B cell (primary cell): ENCODE measurements at regions of chr19 and their contacts with region 1.

Region 1: GRCh38 chr19:860481-861101 is 1.1 kb downstream of the CFD start:
- DNase-seq: peak; percentile 87
- ATAC-seq: peak; percentile 54
- H3K4me3 ChIP-seq: peak overlapping the region in 4 of 5 experiments; percentile 15 to 49 (median 35)
- H3K4me3 Mint-ChIP-seq: peak overlapping the region; percentile 56
- H3K27ac ChIP-seq: no peak overlapping the region
- H3K27ac Mint-ChIP-seq: no peak overlapping the region
- H3K4me1 ChIP-seq: peaks cover 29 to 51% of the 10 kb centered on the region in 2 donors
- H3K4me1 Mint-ChIP-seq: peaks cover 19% of the 10 kb centered on the region
- H3K27me3 ChIP-seq: peaks cover 0 to 38% (median 8%) of the 10 kb centered on the region in 4 experiments
- H3K27me3 Mint-ChIP-seq: peaks cover 7% of the 10 kb centered on the region
- CTCF ChIP-seq: peak; percentile 6

Region 2: GRCh38 chr19:771332-771785 is 89.2 kb before region 1 on chr19:
- CTCF ChIA-PET with region 1: interaction called, 5 read pairs
- POLR2A ChIA-PET with region 1: interaction called, 8 read pairs
- intact Hi-C with region 1: loop called (anchors 2 kb)
- DNase-seq: peak; percentile 50
- ATAC-seq: peak; percentile 45
- H3K4me3 ChIP-seq: no peak overlapping the region
- H3K4me3 Mint-ChIP-seq: no peak overlapping the region
- H3K27ac ChIP-seq: no peak overlapping the region
- H3K27ac Mint-ChIP-seq: no peak overlapping the region
- H3K4me1 ChIP-seq: peaks cover 0 to 3% of the 10 kb centered on the region in 2 donors
- H3K4me1 Mint-ChIP-seq: peaks cover 2% of the 10 kb centered on the region
- H3K27me3 ChIP-seq: peaks cover 0 to 15% (median 0%) of the 10 kb centered on the region in 4 experiments
- H3K27me3 Mint-ChIP-seq: peaks cover 10% of the 10 kb centered on the region
- CTCF ChIP-seq: peak; percentile 48

Region 3: DNA sequence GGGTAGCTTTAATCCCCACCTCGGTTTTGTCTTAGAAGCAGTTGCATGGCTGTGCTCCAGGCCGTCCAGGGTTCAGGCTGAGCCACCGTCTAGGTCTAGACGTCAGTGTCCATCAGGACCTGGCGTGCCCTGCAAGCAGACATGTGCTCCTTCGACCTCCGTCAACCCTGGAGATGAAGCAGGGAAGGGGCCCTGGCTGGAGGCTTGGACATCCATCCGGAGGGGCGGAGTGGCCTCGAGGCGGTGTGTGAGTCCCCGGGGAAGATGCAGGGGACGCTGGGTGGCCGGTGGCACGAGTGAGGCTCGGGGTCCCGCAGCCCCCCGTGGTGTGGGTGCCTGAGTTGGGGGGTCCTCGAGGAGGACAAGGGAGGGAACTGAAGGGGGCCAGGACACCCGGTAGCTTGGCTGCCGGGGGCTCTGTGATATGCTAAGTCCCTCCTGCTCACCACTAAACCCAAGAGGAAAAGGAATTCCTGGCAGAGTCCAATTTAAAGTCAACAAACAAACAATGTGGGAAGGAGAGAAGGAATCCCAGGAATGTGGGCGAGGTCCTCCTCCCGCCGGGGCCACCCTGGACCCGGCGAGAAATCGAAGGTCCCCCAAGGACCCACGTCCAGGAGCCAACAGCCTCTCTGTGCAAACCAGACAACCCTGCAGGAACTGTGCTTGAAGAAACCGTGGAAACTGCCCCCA is 78.3 kb before region 1 on chr19:
- CTCF ChIA-PET with region 1: no interaction called
- POLR2A ChIA-PET with region 1: no interaction called
- intact Hi-C with region 1: no loop called
- DNase-seq: no peak
- ATAC-seq: no peak
- H3K4me3 ChIP-seq: no peak overlapping the region
- H3K4me3 Mint-ChIP-seq: no peak overlapping the region
- H3K27ac ChIP-seq: no peak overlapping the region
- H3K27ac Mint-ChIP-seq: no peak overlapping the region
- H3K4me1 ChIP-seq: no peaks in the 10 kb centered on the region
- H3K4me1 Mint-ChIP-seq: no peaks in the 10 kb centered on the region
- H3K27me3 ChIP-seq: peaks cover 0 to 6% (median 0%) of the 10 kb centered on the region in 4 experiments
- H3K27me3 Mint-ChIP-seq: no peaks in the 10 kb centered on the region
- CTCF ChIP-seq: no peak

Region 4: GRCh38 chr19:907183-907853 is 46.7 kb after region 1 on chr19:
- CTCF ChIA-PET with region 1: interaction called, 46 read pairs
- POLR2A ChIA-PET with region 1: interaction called, 23 read pairs
- intact Hi-C with region 1: no loop called
- DNase-seq: peak; percentile 86
- ATAC-seq: peak; percentile 28
- H3K4me3 ChIP-seq: peak overlapping the region in 4 of 5 experiments; percentile 6 to 38 (median 28)
- H3K4me3 Mint-ChIP-seq: peak overlapping the region; percentile 85
- H3K27ac ChIP-seq: peak overlapping the region; percentile 97 to 99
- H3K27ac Mint-ChIP-seq: peak overlapping the region; percentile 100
- H3K4me1 ChIP-seq: peaks cover 52 to 65% of the 10 kb centered on the region in 2 donors
- H3K4me1 Mint-ChIP-seq: peaks cover 52% of the 10 kb centered on the region
- H3K27me3 ChIP-seq: no peaks in the 10 kb centered on the region
- H3K27me3 Mint-ChIP-seq: no peaks in the 10 kb centered on the region
- CTCF ChIP-seq: no peak

Region 5: DNA sequence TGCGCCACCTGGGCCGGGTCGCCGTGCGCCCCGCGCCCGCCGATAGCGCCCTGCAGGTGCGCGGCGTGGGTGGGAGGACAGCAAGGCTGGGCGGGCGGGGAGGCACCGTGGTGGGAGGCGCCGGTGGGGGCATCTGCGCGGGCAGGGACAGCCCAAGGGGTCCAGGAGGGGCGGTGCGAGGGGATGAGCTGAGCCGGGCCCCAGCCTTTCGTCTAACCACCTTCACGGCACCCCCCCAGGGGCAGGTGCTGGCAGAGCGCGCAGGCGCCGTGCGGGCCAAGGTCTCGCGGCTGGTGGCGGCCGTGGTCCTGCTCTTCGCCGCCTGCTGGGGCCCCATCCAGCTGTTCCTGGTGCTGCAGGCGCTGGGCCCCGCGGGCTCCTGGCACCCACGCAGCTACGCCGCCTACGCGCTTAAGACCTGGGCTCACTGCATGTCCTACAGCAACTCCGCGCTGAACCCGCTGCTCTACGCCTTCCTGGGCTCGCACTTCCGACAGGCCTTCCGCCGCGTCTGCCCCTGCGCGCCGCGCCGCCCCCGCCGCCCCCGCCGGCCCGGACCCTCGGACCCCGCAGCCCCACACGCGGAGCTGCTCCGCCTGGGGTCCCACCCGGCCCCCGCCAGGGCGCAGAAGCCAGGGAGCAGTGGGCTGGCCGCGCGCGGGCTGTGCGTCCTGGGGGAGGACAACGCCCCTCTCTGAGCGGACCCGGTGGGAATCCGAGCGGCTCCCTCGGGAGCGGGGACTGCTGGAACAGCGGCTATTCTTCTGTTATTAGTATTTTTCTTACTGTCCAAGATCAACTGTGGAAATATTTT is 59.7 kb after region 1 on chr19:
- CTCF ChIA-PET with region 1: interaction called, 72 read pairs
- POLR2A ChIA-PET with region 1: interaction called, 15 read pairs
- intact Hi-C with region 1: loop called (anchors 1 kb)
- DNase-seq: peak; percentile 87
- ATAC-seq: peak; percentile 39
- H3K4me3 ChIP-seq: peak overlapping the region in 4 of 5 experiments; percentile 40 to 70 (median 54)
- H3K4me3 Mint-ChIP-seq: peak overlapping the region; percentile 85
- H3K27ac ChIP-seq: peak overlapping the region in 1 of 2 donors; percentile 41
- H3K27ac Mint-ChIP-seq: peak overlapping the region; percentile 38
- H3K4me1 ChIP-seq: peaks cover 49 to 60% of the 10 kb centered on the region in 2 donors
- H3K4me1 Mint-ChIP-seq: peaks cover 35% of the 10 kb centered on the region
- H3K27me3 ChIP-seq: peaks cover 0 to 32% (median 4%) of the 10 kb centered on the region in 4 experiments
- H3K27me3 Mint-ChIP-seq: no peaks in the 10 kb centered on the region
- CTCF ChIP-seq: no peak

Region 6: GRCh38 chr19:1279782-1280341 is 419.3 kb after region 1 on chr19:
- CTCF ChIA-PET with region 1: no interaction called
- POLR2A ChIA-PET with region 1: no interaction called
- intact Hi-C with region 1: no loop called
- DNase-seq: peak; percentile 88
- ATAC-seq: peak; percentile 11
- H3K4me3 ChIP-seq: no peak overlapping the region
- H3K4me3 Mint-ChIP-seq: no peak overlapping the region
- H3K27ac ChIP-seq: no peak overlapping the region
- H3K27ac Mint-ChIP-seq: peak overlapping the region; percentile 83
- H3K4me1 ChIP-seq: peaks cover 13 to 20% of the 10 kb centered on the region in 2 donors
- H3K4me1 Mint-ChIP-seq: peaks cover 23% of the 10 kb centered on the region
- H3K27me3 ChIP-seq: peaks cover 0 to 18% (median 9%) of the 10 kb centered on the region in 4 experiments
- H3K27me3 Mint-ChIP-seq: peaks cover 9% of the 10 kb centered on the region
- CTCF ChIP-seq: peak; percentile 94

Region 7: DNA sequence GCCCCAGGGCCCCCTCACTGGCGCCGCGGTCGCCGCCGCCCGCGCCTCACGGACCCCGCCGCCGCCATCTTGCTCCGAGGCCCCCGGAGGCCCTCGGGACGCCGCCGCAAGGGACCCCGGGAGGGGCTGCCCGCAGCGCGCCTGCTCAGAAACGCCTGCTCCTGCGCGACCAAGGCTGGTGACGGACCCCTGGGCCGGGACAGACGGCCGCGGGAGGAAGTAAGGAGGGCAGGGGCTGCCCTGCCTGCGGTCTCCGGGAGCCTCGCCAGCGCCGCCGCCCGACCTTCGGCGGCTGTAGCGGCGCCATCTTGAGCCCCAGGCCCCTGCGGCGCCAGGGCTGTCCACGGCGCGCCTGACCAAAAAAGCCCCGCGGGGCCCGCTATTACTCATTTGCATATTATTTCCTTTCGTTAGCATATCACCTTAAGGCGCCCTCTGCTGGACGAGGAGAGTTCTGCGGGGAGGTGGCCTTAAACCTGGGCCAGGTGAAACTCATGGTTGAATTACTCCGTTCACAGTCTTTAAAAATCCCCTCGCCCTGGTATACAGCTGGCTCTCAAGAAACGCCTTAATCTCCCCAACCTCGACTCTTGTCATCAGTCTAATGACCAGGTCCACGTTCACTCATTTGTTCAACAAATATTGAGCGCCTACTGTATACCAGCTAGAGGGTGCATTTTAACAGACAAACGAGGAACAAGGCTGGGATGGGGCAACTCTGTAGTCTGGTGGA is 988.0 kb after region 1 on chr19 and contains the start of gene REXO1:
- CTCF ChIA-PET with region 1: no interaction called
- POLR2A ChIA-PET with region 1: interaction called, 12 read pairs
- intact Hi-C with region 1: no loop called
- DNase-seq: peak; percentile 100
- ATAC-seq: peak; percentile 73
- H3K4me3 ChIP-seq: peak within 1 kb of the TSS; percentile 47 to 95 (median 83)
- H3K4me3 Mint-ChIP-seq: peak within 1 kb of the TSS; percentile 90
- H3K27ac ChIP-seq: peak within 1 kb of the TSS; percentile 95 to 97
- H3K27ac Mint-ChIP-seq: peak within 1 kb of the TSS; percentile 93
- H3K4me1 ChIP-seq: peaks cover 59 to 80% of the 10 kb centered on the region in 2 donors
- H3K4me1 Mint-ChIP-seq: peaks cover 63% of the 10 kb centered on the region
- H3K27me3 ChIP-seq: no peaks in the 10 kb centered on the region
- H3K27me3 Mint-ChIP-seq: no peaks in the 10 kb centered on the region
- CTCF ChIP-seq: peak; percentile 87
- total RNA-seq, gene REXO1: 72.4 and 72.6 TPM in 2 replicates